CD8-positive, alpha-beta memory T cell (primary cell): ENCODE measurements at regions of chr12 and their contacts with region 1.

Region 1: DNA sequence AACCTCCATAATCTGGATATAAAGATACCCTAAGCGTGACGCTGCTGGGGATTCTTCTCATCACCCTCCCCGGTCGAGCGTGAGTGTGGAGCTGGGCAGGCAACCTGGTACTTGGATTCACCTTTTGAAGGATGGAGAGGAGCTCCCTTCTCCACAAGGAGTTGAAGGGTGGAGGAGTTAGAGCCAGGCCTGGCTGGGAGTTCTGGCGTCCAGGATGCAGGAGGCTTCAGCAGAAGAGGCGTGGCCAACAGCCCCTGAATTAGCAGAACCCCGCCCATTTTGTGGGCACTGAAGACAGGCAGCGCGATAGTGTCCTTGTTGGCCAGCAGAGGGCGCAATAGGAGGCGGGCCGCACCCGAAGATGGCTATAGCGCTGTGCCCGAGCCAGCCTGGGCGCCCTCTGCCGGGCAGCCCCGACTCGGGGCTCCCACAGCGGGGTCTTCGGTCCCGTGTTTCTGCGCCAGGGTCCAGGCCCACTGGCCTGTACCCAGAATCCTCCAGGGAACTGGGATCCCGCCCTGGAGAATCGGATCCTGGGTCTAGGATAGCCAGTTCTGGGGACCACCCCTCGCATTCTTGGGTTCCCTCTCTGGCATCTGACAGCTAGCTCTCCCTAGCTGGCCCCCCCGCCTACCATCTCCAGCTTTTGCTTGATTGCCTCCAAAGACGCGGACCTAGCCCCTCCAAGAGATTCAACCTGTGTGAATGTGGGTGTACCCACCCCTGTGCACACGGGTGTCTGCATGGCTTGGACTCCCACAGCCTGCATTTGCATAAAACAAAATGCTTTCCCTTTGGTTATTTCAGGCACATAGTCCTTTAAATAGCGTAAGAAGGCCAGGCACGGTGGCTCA is 26.0 kb upstream of the SMUG1 start:
- DNase-seq: peak; percentile 88 to 91 (median 89)
- H3K4me3 ChIP-seq: peak overlapping the region; percentile 56
- H3K4me3 Mint-ChIP-seq: peak overlapping the region; percentile 75 to 91 (median 78)
- H3K27ac ChIP-seq: no peak overlapping the region
- H3K27ac Mint-ChIP-seq: peak overlapping the region in 2 of 8 donors; percentile 74 to 75
- H3K4me1 ChIP-seq: peaks cover 33% of the 10 kb centered on the region
- H3K4me1 Mint-ChIP-seq: peaks cover 25 to 38% (median 30%) of the 10 kb centered on the region in 3 donors
- H3K27me3 ChIP-seq: no peaks in the 10 kb centered on the region
- H3K27me3 Mint-ChIP-seq: peaks cover 11 to 37% of the 10 kb centered on the region in 2 donors

Region 2: GRCh38 chr12:54191550-54192022 is 23.2 kb before region 1 on chr12:
- CTCF ChIA-PET with region 1: interaction called, 122 read pairs
- POLR2A ChIA-PET with region 1: interaction called, 3 read pairs
- DNase-seq: peak; percentile 66 to 83 (median 74)
- H3K4me3 ChIP-seq: no peak overlapping the region
- H3K4me3 Mint-ChIP-seq: peak overlapping the region in 1 of 7 donors; percentile 72
- H3K27ac ChIP-seq: no peak overlapping the region
- H3K27ac Mint-ChIP-seq: peak overlapping the region in 2 of 8 donors; percentile 29 to 78
- H3K4me1 ChIP-seq: peaks cover 17% of the 10 kb centered on the region
- H3K4me1 Mint-ChIP-seq: peaks cover 23 to 34% (median 31%) of the 10 kb centered on the region in 3 donors
- H3K27me3 ChIP-seq: peaks cover 20% of the 10 kb centered on the region
- H3K27me3 Mint-ChIP-seq: peaks cover 36 to 50% of the 10 kb centered on the region in 2 donors

Region 3: GRCh38 chr12:54251667-54252284 is 37.0 kb after region 1 on chr12:
- CTCF ChIA-PET with region 1: no interaction called
- POLR2A ChIA-PET with region 1: no interaction called
- DNase-seq: peak in 2 of 5 donors; percentile 32 to 45
- H3K4me3 ChIP-seq: no peak overlapping the region
- H3K4me3 Mint-ChIP-seq: no peak overlapping the region
- H3K27ac ChIP-seq: no peak overlapping the region
- H3K27ac Mint-ChIP-seq: peak overlapping the region in 1 of 8 donors; percentile 26
- H3K4me1 ChIP-seq: no peaks in the 10 kb centered on the region
- H3K4me1 Mint-ChIP-seq: peaks cover 3 to 9% (median 7%) of the 10 kb centered on the region in 3 donors
- H3K27me3 ChIP-seq: no peaks in the 10 kb centered on the region
- H3K27me3 Mint-ChIP-seq: no peaks in the 10 kb centered on the region